A673 (cell line): ENCODE measurements at regions of chr11 and their contacts with region 1.

Region 1: GRCh38 chr11:39461066-39461465 is 1998.4 kb downstream of the LRRC4C start:
- DNase-seq: peak; percentile 69
- H3K4me3 ChIP-seq: no peak overlapping the region
- H3K27ac ChIP-seq: peak overlapping the region; percentile 99
- H3K4me1 ChIP-seq: peaks cover 54% of the 10 kb centered on the region
- H3K27me3 ChIP-seq: no peaks in the 10 kb centered on the region
- CTCF ChIP-seq: no peak

Region 2: DNA sequence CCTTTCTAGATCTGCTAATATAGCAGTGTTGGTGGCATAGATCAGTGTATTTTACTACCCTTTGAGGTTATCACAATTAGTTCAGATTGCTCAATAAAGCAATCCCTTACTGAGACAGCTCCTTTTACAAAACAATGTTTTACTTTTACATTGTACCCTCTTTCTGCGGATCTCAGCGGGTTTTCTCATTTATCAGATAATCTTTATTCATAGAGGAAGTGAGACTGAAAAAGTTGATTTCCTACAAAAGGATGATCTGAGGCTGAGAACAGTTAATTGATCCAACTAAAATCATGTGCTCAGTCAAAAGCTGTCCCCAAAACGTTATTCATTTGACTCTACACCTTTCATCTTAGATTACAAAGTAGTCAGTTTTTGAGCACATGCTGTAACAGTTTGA is 321.5 kb before region 1 on chr11:
- CTCF ChIA-PET with region 1: no interaction called
- POLR2A ChIA-PET with region 1: interaction called, 3 read pairs
- intact Hi-C with region 1: loop called (anchors 1 kb)
- DNase-seq: peak; percentile 99
- H3K4me3 ChIP-seq: no peak overlapping the region
- H3K27ac ChIP-seq: peak overlapping the region; percentile 61
- H3K4me1 ChIP-seq: peaks cover 36% of the 10 kb centered on the region
- H3K27me3 ChIP-seq: no peaks in the 10 kb centered on the region
- CTCF ChIP-seq: no peak

Region 3: DNA sequence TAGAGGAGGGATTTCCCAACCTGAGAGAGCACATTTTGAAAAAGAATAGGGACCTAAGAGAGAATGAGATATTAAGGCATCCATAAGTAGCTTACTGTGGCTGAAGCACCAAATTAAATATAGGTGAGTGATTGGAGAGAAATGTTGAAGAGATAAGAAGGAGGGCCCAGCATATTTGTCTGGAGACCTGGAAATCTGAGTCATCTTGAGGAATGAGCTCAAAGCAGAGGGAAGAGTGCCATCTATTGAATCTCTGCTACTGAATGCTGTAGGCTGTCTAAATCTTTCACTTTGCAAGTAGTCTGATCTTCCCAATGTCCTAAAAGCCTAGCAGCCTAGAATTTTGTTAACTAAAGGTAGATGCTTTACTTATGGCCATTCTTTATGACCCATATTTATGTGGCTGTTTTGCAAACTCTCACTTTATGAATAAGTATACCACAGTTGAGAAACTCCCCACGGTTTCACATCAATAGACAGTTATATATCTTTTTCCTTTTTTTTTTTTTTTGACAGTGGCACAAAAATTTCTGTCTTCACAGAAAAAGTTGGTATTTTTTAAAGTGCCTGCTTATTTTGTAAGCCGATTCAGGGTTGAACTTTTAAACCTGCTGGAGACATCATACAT is 95.1 kb before region 1 on chr11:
- CTCF ChIA-PET with region 1: interaction called, 3 read pairs
- POLR2A ChIA-PET with region 1: interaction called, 3 read pairs
- intact Hi-C with region 1: loop called (anchors 2 kb)
- DNase-seq: peak; percentile 96
- H3K4me3 ChIP-seq: no peak overlapping the region
- H3K27ac ChIP-seq: peak overlapping the region; percentile 56
- H3K4me1 ChIP-seq: peaks cover 32% of the 10 kb centered on the region
- H3K27me3 ChIP-seq: no peaks in the 10 kb centered on the region
- CTCF ChIP-seq: peak; percentile 99

Region 4: DNA sequence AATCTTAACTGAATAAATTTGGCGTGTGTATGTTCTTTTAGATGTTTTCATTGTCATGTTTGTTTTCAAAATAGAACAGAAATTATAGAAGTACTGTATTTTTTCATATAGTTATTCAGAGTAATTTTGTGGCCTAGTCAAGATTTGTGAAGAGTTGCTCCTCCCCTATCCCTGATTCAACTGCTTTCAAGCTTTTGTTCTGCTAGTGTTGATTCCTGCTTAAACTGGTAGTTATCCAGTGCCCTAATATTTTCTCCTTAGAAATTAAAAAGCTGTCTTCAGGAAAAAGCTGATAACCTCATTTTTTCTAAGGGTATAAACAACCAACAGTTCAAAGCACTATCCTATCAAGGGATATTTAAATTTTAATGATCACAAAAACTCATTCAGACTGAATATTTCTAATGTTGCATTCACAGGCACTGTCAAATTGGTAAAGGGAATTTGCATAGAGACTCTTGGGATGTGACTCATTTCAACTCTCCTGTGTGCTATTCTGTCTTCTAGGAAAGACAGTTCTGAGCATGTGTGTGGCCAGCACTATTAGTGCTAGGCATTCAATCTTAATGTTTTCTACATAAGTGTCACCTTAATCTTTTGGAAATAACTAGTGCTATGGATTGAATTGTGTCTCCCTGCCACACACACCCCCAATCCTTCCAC is 222.4 kb after region 1 on chr11:
- CTCF ChIA-PET with region 1: no interaction called
- POLR2A ChIA-PET with region 1: no interaction called
- intact Hi-C with region 1: no loop called
- DNase-seq: no peak
- H3K4me3 ChIP-seq: no peak overlapping the region
- H3K27ac ChIP-seq: no peak overlapping the region
- H3K4me1 ChIP-seq: no peaks in the 10 kb centered on the region
- H3K27me3 ChIP-seq: no peaks in the 10 kb centered on the region
- CTCF ChIP-seq: no peak

Region 5: GRCh38 chr11:39975091-39975490 is 514.0 kb after region 1 on chr11:
- CTCF ChIA-PET with region 1: no interaction called
- POLR2A ChIA-PET with region 1: no interaction called
- intact Hi-C with region 1: loop called (anchors 10 kb)
- DNase-seq: peak; percentile 92
- H3K4me3 ChIP-seq: no peak overlapping the region
- H3K27ac ChIP-seq: no peak overlapping the region
- H3K4me1 ChIP-seq: peaks cover 25% of the 10 kb centered on the region
- H3K27me3 ChIP-seq: peaks cover 7% of the 10 kb centered on the region
- CTCF ChIP-seq: no peak

Region 6: GRCh38 chr11:40099426-40100169 is 638.5 kb after region 1 on chr11:
- CTCF ChIA-PET with region 1: no interaction called
- POLR2A ChIA-PET with region 1: interaction called, 25 read pairs
- intact Hi-C with region 1: no loop called
- DNase-seq: no peak
- H3K4me3 ChIP-seq: no peak overlapping the region
- H3K27ac ChIP-seq: no peak overlapping the region
- H3K4me1 ChIP-seq: peaks cover 1% of the 10 kb centered on the region
- H3K27me3 ChIP-seq: no peaks in the 10 kb centered on the region
- CTCF ChIP-seq: no peak

Region 7: DNA sequence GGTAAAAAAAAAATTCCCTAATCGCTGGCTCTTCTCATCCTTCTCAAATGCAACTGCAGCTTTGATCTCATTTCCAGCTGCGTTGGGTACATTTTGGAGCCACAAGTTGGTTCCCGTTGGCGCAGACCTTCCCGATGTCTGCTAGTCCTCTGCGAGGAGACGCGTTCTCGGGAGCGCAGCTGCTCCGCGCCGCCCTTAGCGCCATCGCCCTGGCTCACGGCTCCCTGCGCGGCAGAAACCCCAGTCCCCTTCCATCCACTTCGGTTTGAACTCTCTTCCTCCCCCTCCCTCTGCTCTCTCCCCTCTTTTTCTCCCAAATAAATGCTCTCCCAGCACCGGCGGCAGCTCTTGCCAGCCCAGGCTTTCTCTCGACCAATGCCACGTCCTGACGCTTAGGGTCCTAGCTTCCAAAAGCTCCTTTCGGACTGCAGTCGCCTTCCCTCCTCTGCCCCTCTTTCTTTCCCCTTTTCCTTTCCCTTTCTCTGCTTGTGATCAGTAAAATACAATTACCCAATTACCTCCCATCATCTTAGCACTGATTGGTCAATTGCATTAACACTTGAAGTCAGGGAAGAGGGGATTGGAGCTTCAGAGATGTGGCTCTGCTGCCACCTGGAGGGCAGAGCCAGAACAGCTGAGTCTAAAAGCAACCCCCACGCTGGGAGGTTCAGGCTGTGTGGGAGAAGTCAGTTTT is 832.7 kb after region 1 on chr11:
- CTCF ChIA-PET with region 1: interaction called, 4 read pairs
- POLR2A ChIA-PET with region 1: interaction called, 3 read pairs
- intact Hi-C with region 1: loop called (anchors 1 kb)
- DNase-seq: peak; percentile 99
- H3K4me3 ChIP-seq: peak overlapping the region; percentile 61
- H3K27ac ChIP-seq: peak overlapping the region; percentile 78
- H3K4me1 ChIP-seq: peaks cover 11% of the 10 kb centered on the region
- H3K27me3 ChIP-seq: no peaks in the 10 kb centered on the region
- CTCF ChIP-seq: peak; percentile 100